CD4-positive, alpha-beta memory T cell (primary cell): ENCODE measurements at regions of chr10 and their contacts with region 1.

Region 1: DNA sequence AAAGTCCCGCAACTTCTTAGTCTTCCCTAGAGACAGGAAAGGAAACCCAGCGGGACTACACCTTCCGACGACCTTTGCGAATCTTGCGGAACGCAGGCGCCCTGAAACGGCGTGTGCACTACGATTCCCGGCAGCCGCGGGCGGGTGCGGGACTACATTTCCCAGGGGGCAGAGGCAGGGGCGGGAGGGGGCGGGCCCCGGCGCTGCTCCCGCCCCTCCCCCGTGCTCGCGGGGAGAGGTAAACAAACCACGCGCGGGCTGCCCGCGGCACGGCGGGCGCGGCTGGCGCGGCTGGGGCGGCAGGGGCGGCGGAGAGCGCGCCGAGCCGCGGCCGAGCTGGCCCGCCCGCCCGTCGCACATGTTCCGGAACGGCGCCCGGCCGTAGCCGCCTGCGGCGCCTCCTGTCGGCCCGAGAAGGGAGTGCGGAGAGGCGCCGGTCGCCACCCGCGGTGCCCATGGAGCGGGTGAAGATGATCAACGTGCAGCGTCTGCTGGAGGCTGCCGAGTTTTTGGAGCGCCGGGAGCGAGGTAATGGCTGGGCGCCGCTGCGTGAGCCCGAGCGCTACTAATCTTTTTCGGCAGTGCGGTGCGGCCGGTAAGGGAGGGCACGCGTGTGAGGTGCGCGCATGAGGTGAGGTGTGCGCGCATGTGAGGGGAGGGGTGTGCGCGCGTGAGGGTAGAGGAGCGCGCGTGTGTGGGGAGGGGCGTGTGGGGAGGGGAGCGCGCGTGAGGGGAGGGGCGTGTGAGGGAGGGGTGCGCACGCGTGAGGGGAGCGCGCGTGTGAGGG is 18.5 kb downstream of the MXI1 start:
- DNase-seq: peak; percentile 88 to 90 (median 89)
- H3K4me3 ChIP-seq: peak overlapping the region; percentile 39 to 82
- H3K4me3 Mint-ChIP-seq: peak overlapping the region; percentile 92 to 96 (median 94)
- H3K27ac ChIP-seq: peak overlapping the region; percentile 67
- H3K27ac Mint-ChIP-seq: peak overlapping the region; percentile 91 to 96 (median 96)
- H3K4me1 ChIP-seq: peaks cover 29% of the 10 kb centered on the region
- H3K4me1 Mint-ChIP-seq: peaks cover 27 to 62% (median 42%) of the 10 kb centered on the region in 4 donors
- H3K27me3 ChIP-seq: no peaks in the 10 kb centered on the region
- H3K27me3 Mint-ChIP-seq: no peaks in the 10 kb centered on the region

Region 2: GRCh38 chr10:110279407-110279986 is 53.5 kb after region 1 on chr10:
- CTCF ChIA-PET with region 1: interaction called, 7 read pairs
- POLR2A ChIA-PET with region 1: interaction called, 3 read pairs
- intact Hi-C with region 1: loop called (anchors 5 kb)
- DNase-seq: peak; percentile 54 to 58 (median 58)
- H3K4me3 ChIP-seq: no peak overlapping the region
- H3K4me3 Mint-ChIP-seq: peak overlapping the region in 2 of 8 donors; percentile 32 to 58
- H3K27ac ChIP-seq: no peak overlapping the region
- H3K27ac Mint-ChIP-seq: peak overlapping the region in 1 of 7 donors; percentile 51
- H3K4me1 ChIP-seq: peaks cover 22% of the 10 kb centered on the region
- H3K4me1 Mint-ChIP-seq: peaks cover 18 to 50% (median 36%) of the 10 kb centered on the region in 4 donors
- H3K27me3 ChIP-seq: no peaks in the 10 kb centered on the region
- H3K27me3 Mint-ChIP-seq: no peaks in the 10 kb centered on the region

Region 3: DNA sequence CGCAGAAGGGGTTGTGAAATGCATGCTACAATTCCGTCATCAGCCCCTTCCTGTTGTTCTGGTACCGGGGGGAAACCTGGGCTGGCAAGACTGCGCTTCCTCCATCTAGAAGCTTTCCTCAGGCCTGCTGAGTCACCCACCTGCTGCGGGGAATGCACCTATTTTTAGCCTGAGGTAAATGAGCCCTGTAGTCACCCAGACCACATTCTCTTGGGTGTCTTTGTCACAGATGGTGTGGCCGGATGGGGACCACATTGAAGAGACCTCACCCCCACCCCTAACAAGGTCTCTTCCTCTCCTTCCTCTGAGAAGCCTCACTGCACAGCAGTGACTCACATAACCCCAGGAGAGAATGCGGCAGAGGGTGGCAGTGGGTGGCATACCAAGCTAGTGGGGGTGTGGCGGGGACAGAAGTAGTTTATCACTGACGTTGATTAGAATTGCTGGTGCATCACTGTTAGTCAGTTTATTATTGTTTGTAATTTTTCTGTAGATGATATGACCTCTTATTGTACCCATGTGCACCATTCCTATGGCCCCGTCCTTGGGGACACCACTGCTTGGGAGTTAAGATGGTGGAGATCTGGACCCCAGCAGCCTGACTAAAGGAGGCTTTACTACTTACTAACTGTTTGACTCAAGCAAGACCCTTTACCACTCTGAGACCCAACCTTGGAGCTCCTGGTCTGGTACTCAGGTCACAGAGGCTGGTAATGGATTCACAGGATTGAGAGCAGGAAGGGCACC is 188.8 kb after region 1 on chr10:
- CTCF ChIA-PET with region 1: no interaction called
- POLR2A ChIA-PET with region 1: no interaction called
- intact Hi-C with region 1: loop called (anchors 5 kb)
- DNase-seq: peak; percentile 88 to 99 (median 94)
- H3K4me3 ChIP-seq: peak overlapping the region in 1 of 2 donors; percentile 5
- H3K4me3 Mint-ChIP-seq: peak overlapping the region; percentile 22 to 71 (median 62)
- H3K27ac ChIP-seq: peak overlapping the region; percentile 62
- H3K27ac Mint-ChIP-seq: peak overlapping the region; percentile 89 to 98 (median 93)
- H3K4me1 ChIP-seq: peaks cover 43% of the 10 kb centered on the region
- H3K4me1 Mint-ChIP-seq: peaks cover 25 to 60% (median 33%) of the 10 kb centered on the region in 4 donors
- H3K27me3 ChIP-seq: no peaks in the 10 kb centered on the region
- H3K27me3 Mint-ChIP-seq: no peaks in the 10 kb centered on the region

Region 4: GRCh38 chr10:110547139-110547761 is 321.3 kb after region 1 on chr10:
- CTCF ChIA-PET with region 1: no interaction called
- POLR2A ChIA-PET with region 1: no interaction called
- intact Hi-C with region 1: loop called (anchors 5 kb)
- DNase-seq: peak in 4 of 5 donors; percentile 67 to 74 (median 70)
- H3K4me3 ChIP-seq: no peak overlapping the region
- H3K4me3 Mint-ChIP-seq: no peak overlapping the region
- H3K27ac ChIP-seq: no peak overlapping the region
- H3K27ac Mint-ChIP-seq: peak overlapping the region in 1 of 7 donors; percentile 59
- H3K4me1 ChIP-seq: peaks cover 8% of the 10 kb centered on the region
- H3K4me1 Mint-ChIP-seq: peaks cover 4 to 8% (median 5%) of the 10 kb centered on the region in 4 donors
- H3K27me3 ChIP-seq: peaks cover 3% of the 10 kb centered on the region
- H3K27me3 Mint-ChIP-seq: peaks cover 1 to 13% of the 10 kb centered on the region in 2 donors

Region 5: GRCh38 chr10:110567201-110568054 is 341.5 kb after region 1 on chr10 and contains the start of gene SMC3:
- CTCF ChIA-PET with region 1: no interaction called
- POLR2A ChIA-PET with region 1: no interaction called
- intact Hi-C with region 1: loop called (anchors 1 kb)
- DNase-seq: peak; percentile 91 to 96 (median 93)
- H3K4me3 ChIP-seq: peak within 1 kb of the TSS; percentile 72 to 93
- H3K4me3 Mint-ChIP-seq: peak within 1 kb of the TSS; percentile 91 to 97 (median 96)
- H3K27ac ChIP-seq: peak within 1 kb of the TSS; percentile 90
- H3K27ac Mint-ChIP-seq: peak within 1 kb of the TSS; percentile 95 to 99 (median 98)
- H3K4me1 ChIP-seq: peaks cover 45% of the 10 kb centered on the region
- H3K4me1 Mint-ChIP-seq: peaks cover 26 to 51% (median 36%) of the 10 kb centered on the region in 4 donors
- H3K27me3 ChIP-seq: no peaks in the 10 kb centered on the region
- H3K27me3 Mint-ChIP-seq: peaks cover 1 to 12% of the 10 kb centered on the region in 2 donors
- total RNA-seq, gene SMC3: 53.4 to 59.5 TPM